Right lobe of liver (tissue), 6 donors: ENCODE measurements at regions of chr11 and their contacts with region 1.

Region 1: GRCh38 chr11:59680287-59681154 is 11.7 kb upstream of the PATL1 start:
- DNase-seq: peak; percentile 62 to 81 (median 73)
- ATAC-seq: peak; percentile 98 to 100 (median 99)
- H3K4me3 ChIP-seq: no peak overlapping the region
- H3K27ac ChIP-seq: no peak overlapping the region
- H3K4me1 ChIP-seq: peaks cover 0 to 10% (median 0%) of the 10 kb centered on the region in 4 donors
- H3K27me3 ChIP-seq: no peaks in the 10 kb centered on the region
- CTCF ChIP-seq: peak; percentile 81 to 90 (median 85)
- POLR2A ChIP-seq: no peak

Region 2: DNA sequence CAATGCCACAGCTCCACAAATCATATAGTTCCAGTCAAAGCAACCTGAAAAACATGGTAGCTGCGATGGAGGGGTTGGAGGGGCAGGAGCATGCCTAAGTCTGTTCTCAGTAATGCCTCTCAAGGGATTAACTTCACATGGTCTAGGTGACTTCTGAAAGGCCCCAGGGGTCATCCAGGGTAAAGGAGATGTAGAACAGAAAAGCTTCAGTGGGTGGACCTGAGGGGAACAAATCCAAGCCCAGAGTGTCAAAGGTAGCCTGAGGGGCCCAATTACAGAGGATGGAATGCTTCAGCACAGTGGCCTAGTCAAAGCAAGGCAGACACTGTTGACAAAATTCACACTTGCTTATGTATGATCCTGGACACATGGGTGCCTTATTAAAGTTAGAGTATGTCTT is 145.8 kb before region 1 on chr11:
- intact Hi-C with region 1: loop called in 1 of 2 experiments (anchors 10 kb)
- DNase-seq: no peak
- ATAC-seq: no peak
- H3K4me3 ChIP-seq: no peak overlapping the region
- H3K27ac ChIP-seq: no peak overlapping the region
- H3K4me1 ChIP-seq: peaks cover 0 to 9% (median 0%) of the 10 kb centered on the region in 4 donors
- H3K27me3 ChIP-seq: no peaks in the 10 kb centered on the region
- CTCF ChIP-seq: no peak
- POLR2A ChIP-seq: no peak